KBM-7 (cell line): ENCODE measurements at regions of chr4 and their contacts with region 1.

Region 1: GRCh38 chr4:47704693-47705325 is 133.1 kb downstream of the CORIN start:
- DNase-seq: peak; percentile 51

Region 2: DNA sequence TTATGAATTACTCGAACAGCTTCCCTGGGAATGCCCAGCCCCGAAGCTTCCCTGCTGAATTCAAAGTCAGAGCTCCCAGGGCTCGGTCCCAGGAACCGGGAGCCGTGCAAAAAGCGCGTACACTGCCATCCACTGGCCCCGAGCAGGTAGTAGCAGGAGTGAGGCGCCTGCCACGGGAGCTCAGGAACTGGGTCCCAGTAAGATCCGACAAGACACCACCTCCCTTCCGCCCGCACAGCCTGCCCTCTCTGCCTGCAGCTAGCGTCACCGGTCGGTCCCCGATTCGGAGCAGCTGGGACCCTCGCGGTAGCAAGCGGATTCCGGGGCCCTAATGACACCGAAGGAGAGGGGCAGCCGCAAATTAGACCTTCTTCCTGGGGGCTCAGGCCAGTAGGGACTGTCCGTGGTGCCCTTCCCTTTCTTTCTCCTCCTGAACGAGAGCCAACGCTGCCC is 131.9 kb after region 1 on chr4:
- in situ Hi-C with region 1: loop called (anchors 10 kb)
- DNase-seq: peak; percentile 82

Region 3: DNA sequence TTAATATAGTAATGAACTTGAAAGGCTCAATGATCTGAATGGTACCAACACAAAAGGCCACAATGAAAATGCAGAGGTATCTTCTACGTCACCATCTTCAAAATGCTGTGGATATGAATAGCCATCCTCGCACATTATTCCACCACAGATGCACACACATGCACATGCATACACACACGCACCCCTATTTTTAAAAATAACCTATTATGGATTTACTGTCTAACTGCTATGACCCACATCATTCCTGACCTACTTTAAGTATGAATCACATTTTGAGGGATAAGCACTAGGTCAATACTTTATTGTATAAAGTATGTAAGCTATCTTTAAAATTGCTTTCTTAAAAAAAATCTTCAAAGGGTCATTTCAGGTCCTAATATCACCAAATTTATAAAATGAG is 157.5 kb after region 1 on chr4:
- in situ Hi-C with region 1: no loop called
- DNase-seq: no peak

Region 4: GRCh38 chr4:47926639-47927258 is 221.9 kb after region 1 on chr4:
- in situ Hi-C with region 1: loop called (anchors 25 kb)
- DNase-seq: no peak

Region 5: GRCh38 chr4:48008021-48008596 is 303.3 kb after region 1 on chr4:
- in situ Hi-C with region 1: no loop called
- DNase-seq: peak; percentile 27